A673 (cell line): ENCODE measurements at regions of chr4 and their contacts with region 1.

Region 1: GRCh38 chr4:76511947-76512346 is 76.9 kb downstream of the SHROOM3 start:
- DNase-seq: no peak
- H3K4me3 ChIP-seq: no peak overlapping the region
- H3K27ac ChIP-seq: no peak overlapping the region
- H3K4me1 ChIP-seq: peaks cover under 1% of the 10 kb centered on the region
- H3K27me3 ChIP-seq: no peaks in the 10 kb centered on the region
- CTCF ChIP-seq: no peak

Region 2: DNA sequence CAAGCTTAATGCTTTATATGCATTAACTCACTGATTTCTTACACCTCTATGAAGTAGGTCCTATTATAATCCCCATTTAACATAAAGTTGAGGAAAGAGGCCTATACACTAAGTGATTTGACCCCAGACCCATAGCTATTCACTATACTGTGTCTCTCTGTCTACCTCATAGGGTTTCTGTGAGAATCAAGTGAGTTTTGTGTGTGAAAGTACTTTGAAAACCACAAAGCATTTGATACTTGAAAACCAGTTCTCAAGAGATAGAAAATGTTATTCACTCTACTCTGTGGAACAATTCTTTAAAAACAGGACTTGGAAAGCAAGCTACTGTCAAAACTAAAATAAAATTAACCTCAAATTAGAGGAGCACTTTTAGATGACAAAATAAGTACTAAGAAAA is 41.9 kb before region 1 on chr4:
- CTCF ChIA-PET with region 1: no interaction called
- POLR2A ChIA-PET with region 1: no interaction called
- intact Hi-C with region 1: no loop called
- DNase-seq: no peak
- H3K4me3 ChIP-seq: no peak overlapping the region
- H3K27ac ChIP-seq: no peak overlapping the region
- H3K4me1 ChIP-seq: no peaks in the 10 kb centered on the region
- H3K27me3 ChIP-seq: no peaks in the 10 kb centered on the region
- CTCF ChIP-seq: no peak

Region 3: GRCh38 chr4:76624241-76624681 is 112.3 kb after region 1 on chr4:
- CTCF ChIA-PET with region 1: no interaction called
- POLR2A ChIA-PET with region 1: no interaction called
- intact Hi-C with region 1: no loop called
- DNase-seq: no peak
- H3K4me3 ChIP-seq: no peak overlapping the region
- H3K27ac ChIP-seq: no peak overlapping the region
- H3K4me1 ChIP-seq: no peaks in the 10 kb centered on the region
- H3K27me3 ChIP-seq: no peaks in the 10 kb centered on the region
- CTCF ChIP-seq: no peak

Region 4: DNA sequence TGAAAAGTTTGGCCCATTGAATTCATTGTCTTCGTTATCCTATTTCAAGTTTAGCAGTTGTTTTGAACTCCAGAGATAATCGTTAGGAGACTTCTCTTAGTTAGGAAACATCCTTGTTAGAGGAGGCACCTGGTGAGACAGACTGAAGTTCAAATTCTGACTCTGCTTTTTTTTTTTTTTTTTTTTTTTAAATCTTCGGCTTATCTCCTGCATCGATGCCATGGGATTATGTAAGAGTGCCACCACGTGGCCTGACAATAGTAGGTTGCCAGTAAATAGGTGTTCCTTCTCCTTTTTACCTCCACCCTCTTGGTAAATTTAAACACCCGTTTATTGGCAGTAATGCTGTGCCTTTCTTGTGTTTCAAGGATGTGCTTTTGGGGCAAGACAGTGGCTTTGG is 236.7 kb after region 1 on chr4:
- CTCF ChIA-PET with region 1: no interaction called
- POLR2A ChIA-PET with region 1: no interaction called
- intact Hi-C with region 1: loop called (anchors 1 kb)
- DNase-seq: peak; percentile 45
- H3K4me3 ChIP-seq: no peak overlapping the region
- H3K27ac ChIP-seq: no peak overlapping the region
- H3K4me1 ChIP-seq: peaks cover 17% of the 10 kb centered on the region
- H3K27me3 ChIP-seq: no peaks in the 10 kb centered on the region
- CTCF ChIP-seq: peak; percentile 49

Region 5: GRCh38 chr4:77044461-77045150 is 532.7 kb after region 1 on chr4:
- CTCF ChIA-PET with region 1: no interaction called
- POLR2A ChIA-PET with region 1: no interaction called
- intact Hi-C with region 1: loop called (anchors 2 kb)
- DNase-seq: peak; percentile 34
- H3K4me3 ChIP-seq: no peak overlapping the region
- H3K27ac ChIP-seq: no peak overlapping the region
- H3K4me1 ChIP-seq: no peaks in the 10 kb centered on the region
- H3K27me3 ChIP-seq: no peaks in the 10 kb centered on the region
- CTCF ChIP-seq: peak; percentile 58